ENCODE measurements at regions of chr1 and their contacts with region 1.

Region 1: GRCh38 chr1:50735443-50735842 is 224.6 kb downstream of the FAF1 start:
- DNase-seq: no peak
- ATAC-seq: no peak
- H3K4me3 ChIP-seq: no peak overlapping the region
- H3K27ac ChIP-seq: no peak overlapping the region
- H3K4me1 ChIP-seq: no peaks in the 10 kb centered on the region
- H3K27me3 ChIP-seq: no peaks in the 10 kb centered on the region
- CTCF ChIP-seq: no peak
- EP300 ChIP-seq: no peak
- POLR2A ChIP-seq: no peak
- RAD21 ChIP-seq: no peak

Region 2: DNA sequence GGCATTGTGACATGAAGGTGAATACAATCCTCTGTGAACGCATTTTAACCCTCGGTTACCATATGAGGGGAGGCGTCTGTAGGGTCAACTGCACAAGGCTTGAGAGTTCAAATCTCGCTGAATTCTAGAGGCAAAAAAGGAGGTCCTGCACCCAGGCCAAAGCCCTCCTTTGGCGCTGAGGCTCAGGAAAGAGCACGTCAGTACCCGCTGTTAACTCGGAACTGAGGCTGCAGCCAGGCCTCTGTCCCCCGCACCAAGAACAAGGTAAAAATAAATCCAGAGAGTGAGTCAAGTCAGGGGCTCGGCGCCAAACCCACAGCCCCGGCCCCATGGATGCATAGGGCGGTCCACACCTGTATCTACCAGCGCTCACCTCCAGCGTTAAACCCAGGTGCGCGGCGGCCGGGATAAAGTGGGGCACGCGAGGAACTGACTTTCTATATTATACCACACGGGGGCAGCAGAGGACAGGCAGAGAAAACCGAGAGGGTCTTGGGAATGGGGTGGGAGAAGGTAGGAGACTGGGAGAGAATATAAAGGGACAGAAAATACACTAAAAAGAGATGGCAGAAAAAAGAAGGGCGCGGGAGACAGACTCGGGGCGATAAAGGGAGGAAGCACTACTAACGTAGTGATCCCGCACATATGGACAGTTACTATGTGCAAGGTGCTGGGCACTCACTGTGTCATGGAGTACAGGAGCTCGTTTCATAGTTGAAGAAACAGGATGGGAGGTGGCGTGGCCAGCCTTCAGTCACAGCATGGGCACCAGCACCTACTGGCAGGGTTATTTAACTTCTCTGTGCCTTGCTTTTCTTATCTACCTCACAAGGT is 367.0 kb before region 1 on chr1:
- CTCF ChIA-PET with region 1: interaction called, 4 read pairs
- POLR2A ChIA-PET with region 1: no interaction called
- in situ Hi-C with region 1: no loop called
- intact Hi-C with region 1: loop called (anchors 1 kb)
- DNase-seq: peak; percentile 17
- ATAC-seq: peak; percentile 88
- H3K4me3 ChIP-seq: peak overlapping the region in 1 of 3 experiments; percentile 41; a peak in 1 of 6 replicates
- H3K27ac ChIP-seq: no peak overlapping the region
- H3K4me1 ChIP-seq: no peaks in the 10 kb centered on the region
- H3K27me3 ChIP-seq: peaks cover 0 to 15% of the 10 kb centered on the region in 2 experiments; a peak in 3 of 5 replicates
- CTCF ChIP-seq: peak; percentile 84
- EP300 ChIP-seq: no peak
- POLR2A ChIP-seq: no peak
- RAD21 ChIP-seq: peak; percentile 62; the same call in 1 of the 2 replicates

Region 3: DNA sequence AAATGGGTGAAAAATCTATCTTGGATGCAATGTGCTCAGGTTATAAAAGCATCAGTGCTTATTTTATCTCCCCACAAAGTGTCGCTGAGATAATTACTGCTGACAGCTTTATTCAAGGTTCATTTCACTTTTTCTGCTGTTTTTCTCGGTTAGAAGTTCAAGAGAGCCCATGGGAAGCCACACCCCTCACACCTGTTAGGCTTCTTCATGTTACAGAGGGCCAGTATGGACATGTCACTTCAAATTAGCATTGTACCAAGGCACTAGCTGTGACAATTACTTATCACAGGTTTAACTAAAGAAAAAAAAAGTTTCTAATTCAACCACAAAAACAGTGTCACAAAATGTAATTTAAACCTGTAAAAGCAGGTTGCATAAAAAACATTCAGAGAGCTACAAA is 124.9 kb before region 1 on chr1:
- CTCF ChIA-PET with region 1: no interaction called
- POLR2A ChIA-PET with region 1: no interaction called
- in situ Hi-C with region 1: no loop called
- intact Hi-C with region 1: no loop called
- DNase-seq: no peak
- ATAC-seq: no peak
- H3K4me3 ChIP-seq: no peak overlapping the region
- H3K27ac ChIP-seq: no peak overlapping the region
- H3K4me1 ChIP-seq: no peaks in the 10 kb centered on the region
- H3K27me3 ChIP-seq: no peaks in the 10 kb centered on the region; a peak in 1 of 5 replicates
- CTCF ChIP-seq: no peak
- EP300 ChIP-seq: no peak
- POLR2A ChIP-seq: no peak
- RAD21 ChIP-seq: no peak

Region 4: DNA sequence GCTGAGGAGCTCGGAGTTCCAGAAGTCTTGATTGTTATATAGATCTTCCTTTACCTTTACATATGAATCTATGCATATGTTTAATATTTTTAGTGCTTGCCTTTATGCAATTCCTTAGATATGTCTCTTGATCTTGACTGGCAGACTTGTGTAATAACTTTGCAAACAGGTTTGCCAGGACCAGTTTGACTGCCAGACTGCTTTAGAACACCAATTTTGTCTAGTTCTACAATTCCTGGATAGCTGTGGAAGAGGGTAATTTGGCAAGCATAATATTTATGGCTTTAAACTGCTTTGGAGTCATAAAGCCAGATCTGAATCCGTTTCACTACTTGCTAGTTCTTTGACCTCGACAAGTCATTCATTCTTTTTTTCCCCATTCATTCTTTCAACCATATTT is 25.4 kb before region 1 on chr1:
- CTCF ChIA-PET with region 1: no interaction called
- POLR2A ChIA-PET with region 1: no interaction called
- in situ Hi-C with region 1: no loop called
- intact Hi-C with region 1: no loop called
- DNase-seq: no peak
- ATAC-seq: no peak
- H3K4me3 ChIP-seq: no peak overlapping the region
- H3K27ac ChIP-seq: no peak overlapping the region
- H3K4me1 ChIP-seq: no peaks in the 10 kb centered on the region
- H3K27me3 ChIP-seq: no peaks in the 10 kb centered on the region
- CTCF ChIP-seq: no peak
- EP300 ChIP-seq: no peak
- POLR2A ChIP-seq: no peak
- RAD21 ChIP-seq: no peak

Measured in HepG2 (cell line).